Heart left ventricle (tissue), 16 donors: ENCODE measurements at regions of chr1 and their contacts with region 1.

Region 1: DNA sequence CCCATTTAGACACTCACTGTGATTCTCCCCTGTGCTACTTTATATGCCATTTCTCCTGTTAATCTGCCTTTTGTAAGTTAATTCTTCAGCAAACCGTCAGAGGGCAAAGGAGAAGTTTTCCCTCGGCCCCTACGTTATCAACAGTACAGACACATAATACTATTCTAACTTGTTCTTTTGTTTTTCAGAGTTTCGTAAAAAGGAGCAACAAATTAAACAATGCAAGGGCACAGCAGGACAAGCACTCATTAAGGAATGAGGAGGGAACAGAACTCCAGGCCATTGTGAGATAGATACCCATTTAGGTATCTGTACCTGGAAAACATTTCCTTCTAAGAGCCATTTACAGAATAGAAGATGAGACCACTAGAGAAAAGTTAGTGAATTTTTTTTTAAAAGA is 32.3 kb downstream of the CNN3 start:
- DNase-seq: no peak
- ATAC-seq: no peak
- H3K4me3 ChIP-seq: no peak overlapping the region
- H3K27ac ChIP-seq: no peak overlapping the region
- H3K4me1 ChIP-seq: peaks cover 0 to 14% (median 0%) of the 10 kb centered on the region in 12 donors
- H3K27me3 ChIP-seq: no peaks in the 10 kb centered on the region
- CTCF ChIP-seq: no peak
- POLR2A ChIP-seq: no peak

Region 2: DNA sequence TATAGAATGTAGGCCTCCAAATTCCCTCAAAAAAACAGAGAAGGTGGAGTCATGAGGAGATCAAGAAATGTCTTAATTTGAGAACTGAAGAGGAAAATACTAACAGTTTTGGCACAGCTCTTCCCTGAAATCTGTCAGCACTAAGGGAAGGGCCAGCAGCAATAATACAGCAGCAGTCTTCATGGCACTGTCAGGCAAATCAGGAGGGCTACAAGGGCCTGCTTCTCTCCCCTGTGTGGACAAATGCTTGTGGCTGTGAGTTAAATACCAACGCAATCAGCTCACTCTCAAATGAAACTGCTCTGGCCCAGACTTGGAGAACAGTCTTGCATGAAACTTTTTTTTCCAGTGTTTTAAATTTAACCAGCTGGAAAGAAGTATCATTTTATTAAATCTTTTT is 52.8 kb after region 1 on chr1:
- intact Hi-C with region 1: loop called in 1 of 10 experiments (anchors 2 kb)
- DNase-seq: peak in 3 of 5 donors; percentile 22 to 32 (median 26)
- ATAC-seq: peak; percentile 73 to 88 (median 77)
- H3K4me3 ChIP-seq: no peak overlapping the region
- H3K27ac ChIP-seq: peak overlapping the region in 10 of 12 donors; percentile 1 to 78 (median 52)
- H3K4me1 ChIP-seq: peaks cover 0 to 36% (median 9%) of the 10 kb centered on the region in 12 donors
- H3K27me3 ChIP-seq: no peaks in the 10 kb centered on the region
- CTCF ChIP-seq: no peak
- POLR2A ChIP-seq: no peak